B cell (primary cell): ENCODE measurements at regions of chr12 and their contacts with region 1.

Region 1: DNA sequence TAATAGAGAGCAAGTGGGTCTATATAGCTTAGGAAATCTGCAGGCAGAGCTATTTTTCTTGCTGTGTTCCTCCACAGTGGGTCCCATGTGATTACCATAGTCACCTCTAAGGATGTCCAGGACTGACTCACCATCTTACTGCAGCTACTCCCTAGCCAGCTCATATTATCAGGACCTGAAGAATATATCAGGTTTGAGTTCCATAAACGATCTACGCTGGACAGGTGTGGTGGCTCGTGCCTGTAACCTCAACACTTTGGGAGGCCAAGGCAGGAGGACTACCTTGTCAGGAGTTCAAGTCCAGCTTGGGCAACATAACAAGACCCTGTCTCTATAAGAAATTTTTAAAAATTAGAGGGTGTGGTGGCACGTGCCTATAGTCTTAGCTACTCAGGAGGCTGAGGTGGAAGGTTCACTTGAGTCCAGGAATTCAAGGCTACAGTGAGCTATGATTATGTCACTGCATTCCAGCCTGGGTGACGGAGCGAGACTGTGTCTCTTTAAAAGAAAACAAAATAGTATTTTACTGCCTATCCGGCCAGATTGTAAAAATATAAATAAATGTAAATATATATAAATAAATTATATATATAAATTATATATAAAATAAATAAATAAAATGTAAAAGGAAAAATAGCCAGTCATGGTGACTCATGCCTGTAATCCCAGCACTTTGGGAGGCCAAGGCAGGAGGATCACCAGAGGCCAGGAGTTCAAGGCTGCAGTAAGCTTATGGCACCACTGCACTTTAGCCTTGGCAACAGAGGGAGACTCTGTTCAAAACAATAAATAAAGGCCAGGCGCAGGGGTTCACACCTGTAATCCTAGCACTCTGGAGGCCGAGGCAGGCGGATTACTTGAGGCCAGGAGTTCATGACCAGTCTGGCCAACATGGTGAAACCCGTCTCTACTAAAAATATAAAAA is 6.9 kb upstream of the SPRYD4 start:
- DNase-seq: no peak
- ATAC-seq: no peak
- H3K4me3 ChIP-seq: no peak overlapping the region
- H3K4me3 Mint-ChIP-seq: no peak overlapping the region
- H3K27ac ChIP-seq: peak overlapping the region; percentile 40 to 70
- H3K27ac Mint-ChIP-seq: peak overlapping the region; percentile 91
- H3K4me1 ChIP-seq: peaks cover 13 to 24% of the 10 kb centered on the region in 2 donors
- H3K4me1 Mint-ChIP-seq: peaks cover 23% of the 10 kb centered on the region
- H3K27me3 ChIP-seq: no peaks in the 10 kb centered on the region
- H3K27me3 Mint-ChIP-seq: no peaks in the 10 kb centered on the region
- CTCF ChIP-seq: no peak

Region 2: GRCh38 chr12:56266693-56267442 is 194.6 kb before region 1 on chr12 and contains the start of gene COQ10A:
- CTCF ChIA-PET with region 1: interaction called, 16 read pairs
- POLR2A ChIA-PET with region 1: interaction called, 5 read pairs
- intact Hi-C with region 1: loop called (anchors 1 kb)
- DNase-seq: peak; percentile 94
- ATAC-seq: peak; percentile 89
- H3K4me3 ChIP-seq: peak within 1 kb of the TSS; percentile 65 to 86 (median 75)
- H3K4me3 Mint-ChIP-seq: peak within 1 kb of the TSS; percentile 91
- H3K27ac ChIP-seq: peak within 1 kb of the TSS; percentile 94
- H3K27ac Mint-ChIP-seq: peak within 1 kb of the TSS; percentile 95
- H3K4me1 ChIP-seq: peaks cover 10 to 15% of the 10 kb centered on the region in 2 donors
- H3K4me1 Mint-ChIP-seq: peaks cover 20% of the 10 kb centered on the region
- H3K27me3 ChIP-seq: no peaks in the 10 kb centered on the region
- H3K27me3 Mint-ChIP-seq: no peaks in the 10 kb centered on the region
- CTCF ChIP-seq: peak; percentile 72
- total RNA-seq, gene COQ10A: 73.5 and 76.3 TPM in 2 replicates

Region 3: GRCh38 chr12:56308714-56309113 is 152.8 kb before region 1 on chr12:
- CTCF ChIA-PET with region 1: interaction called, 44 read pairs
- POLR2A ChIA-PET with region 1: interaction called, 3 read pairs
- intact Hi-C with region 1: no loop called
- DNase-seq: no peak
- ATAC-seq: no peak
- H3K4me3 ChIP-seq: no peak overlapping the region
- H3K4me3 Mint-ChIP-seq: no peak overlapping the region
- H3K27ac ChIP-seq: no peak overlapping the region
- H3K27ac Mint-ChIP-seq: no peak overlapping the region
- H3K4me1 ChIP-seq: no peaks in the 10 kb centered on the region
- H3K4me1 Mint-ChIP-seq: no peaks in the 10 kb centered on the region
- H3K27me3 ChIP-seq: no peaks in the 10 kb centered on the region
- H3K27me3 Mint-ChIP-seq: no peaks in the 10 kb centered on the region
- CTCF ChIP-seq: no peak

Region 4: DNA sequence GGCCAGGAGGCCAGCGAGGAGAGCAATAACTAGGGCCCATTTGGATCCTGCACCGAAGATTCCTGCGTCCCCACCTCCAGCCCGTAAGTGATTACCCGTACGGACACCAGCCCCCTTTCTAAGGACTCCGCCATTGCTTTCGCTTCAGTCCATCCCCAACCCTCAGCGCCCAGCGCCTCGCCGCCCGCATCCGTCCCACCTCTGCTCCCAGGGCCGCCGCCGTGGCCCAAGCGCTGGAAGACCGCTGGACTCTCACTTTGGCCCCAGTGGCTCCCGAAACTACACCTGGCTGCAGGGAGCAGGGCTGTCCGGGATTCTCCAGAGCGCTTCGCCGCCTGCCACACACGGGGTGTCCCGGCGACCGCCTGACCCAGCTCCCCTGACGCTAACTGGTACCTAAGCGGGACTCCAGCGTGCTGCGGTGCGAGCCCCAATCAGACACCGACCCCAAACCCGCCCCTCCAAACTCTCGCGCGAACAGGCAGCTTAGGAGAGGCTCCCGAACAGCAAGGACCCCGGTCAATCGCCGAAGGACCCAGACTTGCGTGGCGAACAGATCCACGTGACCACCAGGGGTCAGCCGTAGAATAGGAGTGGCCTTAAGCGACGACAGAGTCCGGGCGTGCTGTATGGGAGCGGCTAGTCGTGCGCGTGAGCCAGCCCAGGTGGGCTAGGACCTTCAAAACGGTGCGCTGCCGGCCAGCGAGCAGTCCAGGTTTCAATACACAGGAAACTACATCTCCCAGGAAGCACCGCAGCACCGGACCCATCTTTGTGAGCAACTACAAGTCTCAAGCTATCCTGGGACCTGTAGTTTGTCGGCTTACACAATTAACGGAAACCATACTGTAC is 145.6 kb before region 1 on chr12 and contains the start of gene CNPY2:
- CTCF ChIA-PET with region 1: interaction called, 44 read pairs
- POLR2A ChIA-PET with region 1: interaction called, 4 read pairs
- intact Hi-C with region 1: loop called (anchors 1 kb)
- DNase-seq: peak; percentile 99
- ATAC-seq: peak; percentile 86
- H3K4me3 ChIP-seq: peak within 1 kb of the TSS; percentile 78 to 94 (median 91)
- H3K4me3 Mint-ChIP-seq: peak within 1 kb of the TSS; percentile 99
- H3K27ac ChIP-seq: peak within 1 kb of the TSS; percentile 67 to 90
- H3K27ac Mint-ChIP-seq: peak within 1 kb of the TSS; percentile 99
- H3K4me1 ChIP-seq: peaks cover 12 to 15% of the 10 kb centered on the region in 2 donors
- H3K4me1 Mint-ChIP-seq: peaks cover 10% of the 10 kb centered on the region
- H3K27me3 ChIP-seq: no peaks in the 10 kb centered on the region
- H3K27me3 Mint-ChIP-seq: no peaks in the 10 kb centered on the region
- CTCF ChIP-seq: no peak
- total RNA-seq, gene CNPY2: 89.0 and 91.2 TPM in 2 replicates

Region 5: DNA sequence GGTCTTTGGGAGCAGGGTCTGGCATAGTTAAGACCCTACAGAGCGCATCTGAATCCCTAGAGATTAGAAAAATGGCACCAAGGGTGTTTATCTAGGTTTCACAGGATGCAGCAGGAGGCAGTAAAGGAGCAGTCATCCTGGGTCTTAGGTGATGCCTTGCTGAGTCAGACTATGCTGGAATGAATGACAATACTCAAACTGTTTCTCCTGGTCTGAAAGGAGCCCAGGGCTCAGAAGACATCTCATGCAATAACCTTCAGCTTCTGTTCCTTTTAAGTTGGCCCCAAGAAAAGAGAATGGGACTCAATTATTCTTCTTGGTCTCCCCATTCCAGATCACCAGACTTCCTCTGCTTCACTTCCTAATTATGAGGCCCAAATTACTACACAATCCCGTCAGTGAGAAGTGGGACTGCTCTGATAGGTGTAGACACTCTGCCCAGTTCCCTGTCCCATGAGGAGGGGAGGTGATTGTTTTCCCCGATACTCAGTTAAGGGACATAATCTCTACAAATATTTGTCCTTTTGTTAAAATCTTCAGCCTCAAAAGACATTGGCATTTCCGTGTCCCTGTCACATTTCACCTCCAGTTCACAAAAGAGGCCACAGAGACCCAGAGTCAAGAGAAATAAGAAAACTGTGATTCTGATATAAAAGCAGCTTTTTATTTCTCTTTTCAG is 84.0 kb before region 1 on chr12:
- CTCF ChIA-PET with region 1: interaction called, 11 read pairs
- POLR2A ChIA-PET with region 1: no interaction called
- intact Hi-C with region 1: loop called (anchors 5 kb)
- DNase-seq: no peak
- ATAC-seq: no peak
- H3K4me3 ChIP-seq: no peak overlapping the region
- H3K4me3 Mint-ChIP-seq: peak overlapping the region; percentile 76
- H3K27ac ChIP-seq: peak overlapping the region; percentile 75 to 80
- H3K27ac Mint-ChIP-seq: peak overlapping the region; percentile 96
- H3K4me1 ChIP-seq: peaks cover 49 to 64% of the 10 kb centered on the region in 2 donors
- H3K4me1 Mint-ChIP-seq: peaks cover 47% of the 10 kb centered on the region
- H3K27me3 ChIP-seq: no peaks in the 10 kb centered on the region
- H3K27me3 Mint-ChIP-seq: no peaks in the 10 kb centered on the region
- CTCF ChIP-seq: no peak

Region 6: GRCh38 chr12:56448860-56449621 is 12.5 kb before region 1 on chr12 and contains the start of gene TIMELESS:
- CTCF ChIA-PET with region 1: interaction called, 32 read pairs
- POLR2A ChIA-PET with region 1: interaction called, 9 read pairs
- intact Hi-C with region 1: loop called (anchors 1 kb)
- DNase-seq: peak; percentile 95
- ATAC-seq: peak; percentile 96
- H3K4me3 ChIP-seq: peak within 1 kb of the TSS; percentile 69 to 98 (median 83)
- H3K4me3 Mint-ChIP-seq: peak within 1 kb of the TSS; percentile 90
- H3K27ac ChIP-seq: peak within 1 kb of the TSS; percentile 53 to 85
- H3K27ac Mint-ChIP-seq: peak within 1 kb of the TSS; percentile 92
- H3K4me1 ChIP-seq: peaks cover 10 to 12% of the 10 kb centered on the region in 2 donors
- H3K4me1 Mint-ChIP-seq: peaks cover 23% of the 10 kb centered on the region
- H3K27me3 ChIP-seq: no peaks in the 10 kb centered on the region
- H3K27me3 Mint-ChIP-seq: no peaks in the 10 kb centered on the region
- CTCF ChIP-seq: no peak
- total RNA-seq, gene TIMELESS: 44.4 and 46.6 TPM in 2 replicates

Region 7: DNA sequence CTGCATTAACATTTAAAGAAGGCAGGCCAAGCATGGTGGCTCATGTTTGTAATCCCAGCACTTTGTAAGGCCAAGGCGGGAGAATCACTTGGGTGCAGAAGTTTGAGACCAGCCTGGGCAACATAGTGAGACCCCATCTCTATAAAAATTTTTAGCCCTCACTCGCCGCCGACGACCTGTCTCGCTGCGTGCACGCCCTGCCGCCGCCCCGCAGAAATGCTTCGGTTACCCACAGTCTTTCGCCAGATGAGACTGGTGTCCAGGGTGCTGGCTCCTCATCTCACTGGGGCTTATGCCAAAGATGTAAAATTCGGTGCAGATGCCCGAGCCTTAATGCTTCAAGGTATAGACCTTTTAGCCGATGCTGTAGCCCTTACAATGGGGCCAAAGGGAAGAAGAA is 49.3 kb after region 1 on chr12:
- CTCF ChIA-PET with region 1: no interaction called
- POLR2A ChIA-PET with region 1: no interaction called
- intact Hi-C with region 1: no loop called
- DNase-seq: no peak
- ATAC-seq: no peak
- H3K4me3 ChIP-seq: no peak overlapping the region
- H3K4me3 Mint-ChIP-seq: no peak overlapping the region
- H3K27ac ChIP-seq: no peak overlapping the region
- H3K27ac Mint-ChIP-seq: no peak overlapping the region
- H3K4me1 ChIP-seq: peaks cover 0 to 2% of the 10 kb centered on the region in 2 donors
- H3K4me1 Mint-ChIP-seq: peaks cover 2% of the 10 kb centered on the region
- H3K27me3 ChIP-seq: no peaks in the 10 kb centered on the region
- H3K27me3 Mint-ChIP-seq: peaks cover 13% of the 10 kb centered on the region
- CTCF ChIP-seq: no peak

Region 8: GRCh38 chr12:57332646-57333312 is 871.3 kb after region 1 on chr12:
- CTCF ChIA-PET with region 1: no interaction called
- POLR2A ChIA-PET with region 1: interaction called, 14 read pairs
- intact Hi-C with region 1: no loop called
- DNase-seq: no peak
- ATAC-seq: no peak
- H3K4me3 ChIP-seq: no peak overlapping the region
- H3K4me3 Mint-ChIP-seq: no peak overlapping the region
- H3K27ac ChIP-seq: no peak overlapping the region
- H3K27ac Mint-ChIP-seq: no peak overlapping the region
- H3K4me1 ChIP-seq: no peaks in the 10 kb centered on the region
- H3K4me1 Mint-ChIP-seq: no peaks in the 10 kb centered on the region
- H3K27me3 ChIP-seq: no peaks in the 10 kb centered on the region
- H3K27me3 Mint-ChIP-seq: no peaks in the 10 kb centered on the region
- CTCF ChIP-seq: no peak